ENCODE measurements at regions of chr1 and their contacts with region 1.

Region 1: DNA sequence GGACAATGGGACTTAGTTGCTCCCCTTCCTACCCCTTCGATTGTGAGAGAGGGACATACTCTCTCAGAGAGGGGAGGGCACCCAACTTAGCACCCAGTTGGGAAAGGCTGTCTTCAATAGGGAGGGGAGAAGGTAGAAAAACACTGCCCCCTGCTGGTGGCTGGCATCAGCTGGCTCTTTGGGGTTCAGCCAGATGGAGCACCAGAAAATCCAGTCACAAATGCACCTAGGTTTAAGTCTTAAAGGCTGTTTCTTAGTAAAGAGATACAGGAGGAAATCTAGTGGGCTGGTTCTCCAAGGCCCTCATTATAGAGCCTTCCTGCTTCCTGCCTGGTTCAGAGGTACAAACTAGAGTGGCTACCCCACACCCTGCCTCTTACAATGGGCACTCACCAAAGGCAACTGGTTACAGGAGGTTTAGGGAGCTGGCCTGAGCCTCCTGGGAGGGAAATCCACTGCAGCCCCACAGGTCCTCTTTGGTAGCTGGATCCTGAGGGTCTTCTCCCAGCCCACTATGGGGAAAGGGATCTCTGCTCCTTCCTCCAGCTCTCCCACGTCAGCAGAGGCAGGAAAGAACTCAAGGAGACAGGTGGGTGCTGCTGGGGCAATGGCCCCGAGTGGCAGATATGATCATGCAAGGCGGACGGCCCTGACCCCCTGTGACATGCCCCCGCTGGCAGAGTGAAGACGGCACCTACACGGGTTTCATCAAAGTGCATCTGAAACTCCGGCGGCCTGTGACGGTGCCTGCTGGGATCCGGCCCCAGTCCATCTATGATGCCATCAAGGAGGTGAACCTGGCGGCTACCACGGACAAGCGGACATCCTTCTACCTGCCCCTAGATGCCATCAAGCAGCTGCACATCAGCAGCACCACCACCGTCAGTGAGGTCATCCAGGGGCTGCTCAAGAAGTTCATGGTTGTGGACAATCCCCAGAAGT is 28.3 kb downstream of the EIF2D start:
- DNase-seq: peak; percentile 93
- ATAC-seq: peak; percentile 31
- H3K4me3 Mint-ChIP-seq: peak overlapping the region; percentile 65
- H3K27ac Mint-ChIP-seq: peak overlapping the region; percentile 99
- H3K4me1 Mint-ChIP-seq: peaks cover 87% of the 10 kb centered on the region
- H3K27me3 Mint-ChIP-seq: no peaks in the 10 kb centered on the region

Region 2: GRCh38 chr1:205204552-205204951 is 1379.4 kb before region 1 on chr1:
- CTCF ChIA-PET with region 1: no interaction called
- POLR2A ChIA-PET with region 1: no interaction called
- intact Hi-C with region 1: loop called in 1 of 2 experiments (anchors 10 kb)
- DNase-seq: no peak
- ATAC-seq: no peak
- H3K4me3 Mint-ChIP-seq: peak overlapping the region; percentile 0
- H3K27ac Mint-ChIP-seq: peak overlapping the region; percentile 85
- H3K4me1 Mint-ChIP-seq: peaks cover 74% of the 10 kb centered on the region
- H3K27me3 Mint-ChIP-seq: no peaks in the 10 kb centered on the region

Region 3: GRCh38 chr1:206469933-206470691 is 113.9 kb before region 1 on chr1 and contains the start of gene IKBKE:
- CTCF ChIA-PET with region 1: interaction called, 9 read pairs
- POLR2A ChIA-PET with region 1: interaction called, 3 read pairs
- intact Hi-C with region 1: loop called in 1 of 2 experiments (anchors 5 kb)
- DNase-seq: peak; percentile 74
- ATAC-seq: peak; percentile 53
- H3K4me3 Mint-ChIP-seq: peak within 1 kb of the TSS; percentile 83
- H3K27ac Mint-ChIP-seq: peak within 1 kb of the TSS; percentile 91
- H3K4me1 Mint-ChIP-seq: peaks cover 92% of the 10 kb centered on the region
- H3K27me3 Mint-ChIP-seq: no peaks in the 10 kb centered on the region
- total RNA-seq, gene IKBKE: 15.3 to 17.2 TPM

Region 4: DNA sequence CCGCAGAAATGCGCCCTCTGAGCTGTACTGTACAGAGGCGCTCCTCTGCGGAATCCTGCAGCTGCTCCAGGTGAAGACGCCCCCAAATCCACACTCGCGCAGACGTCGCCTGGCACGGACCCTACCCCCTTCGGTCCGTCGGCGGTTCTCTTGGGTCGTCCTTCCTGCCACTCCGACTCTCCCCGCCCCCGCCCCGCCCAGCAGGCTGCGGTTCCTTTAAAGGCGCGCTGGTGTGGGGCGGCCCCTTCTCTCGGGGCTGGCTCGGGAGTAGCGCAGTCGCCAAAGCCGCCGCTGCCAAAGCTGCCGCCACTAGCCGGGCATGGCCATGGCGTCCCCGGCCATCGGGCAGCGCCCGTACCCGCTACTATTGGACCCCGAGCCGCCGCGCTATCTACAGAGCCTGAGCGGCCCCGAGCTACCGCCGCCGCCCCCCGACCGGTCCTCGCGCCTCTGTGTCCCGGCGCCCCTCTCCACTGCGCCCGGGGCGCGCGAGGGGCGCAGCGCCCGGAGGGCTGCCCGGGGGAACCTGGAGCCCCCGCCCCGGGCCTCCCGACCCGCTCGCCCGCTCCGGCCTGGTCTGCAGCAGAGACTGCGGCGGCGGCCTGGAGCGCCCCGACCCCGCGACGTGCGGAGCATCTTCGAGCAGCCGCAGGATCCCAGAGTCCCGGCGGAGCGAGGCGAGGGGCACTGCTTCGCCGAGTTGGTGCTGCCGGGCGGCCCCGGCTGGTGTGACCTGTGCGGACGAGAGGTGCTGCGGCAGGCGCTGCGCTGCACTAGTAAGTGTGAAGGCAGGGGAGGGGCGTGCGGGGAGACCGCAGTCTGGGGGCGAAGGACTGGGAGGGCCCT is 76.5 kb before region 1 on chr1 and contains the start of gene RASSF5:
- CTCF ChIA-PET with region 1: interaction called, 16 read pairs
- POLR2A ChIA-PET with region 1: no interaction called
- intact Hi-C with region 1: loop called (anchors 2 kb)
- DNase-seq: peak; percentile 90
- ATAC-seq: peak; percentile 78
- H3K4me3 Mint-ChIP-seq: peak within 1 kb of the TSS; percentile 63
- H3K27ac Mint-ChIP-seq: peak within 1 kb of the TSS; percentile 49
- H3K4me1 Mint-ChIP-seq: peaks cover 47% of the 10 kb centered on the region
- H3K27me3 Mint-ChIP-seq: peaks cover 31% of the 10 kb centered on the region
- total RNA-seq, gene RASSF5: 223 to 239 TPM

Region 5: GRCh38 chr1:206551986-206552326 is 32.0 kb before region 1 on chr1:
- CTCF ChIA-PET with region 1: interaction called, 621 read pairs
- POLR2A ChIA-PET with region 1: interaction called, 51 read pairs
- intact Hi-C with region 1: loop called in 1 of 2 experiments (anchors 1 kb)
- DNase-seq: peak; percentile 91
- ATAC-seq: peak; percentile 84
- H3K4me3 Mint-ChIP-seq: peak overlapping the region; percentile 61
- H3K27ac Mint-ChIP-seq: peak overlapping the region; percentile 98
- H3K4me1 Mint-ChIP-seq: peaks cover 62% of the 10 kb centered on the region
- H3K27me3 Mint-ChIP-seq: no peaks in the 10 kb centered on the region

Region 6: DNA sequence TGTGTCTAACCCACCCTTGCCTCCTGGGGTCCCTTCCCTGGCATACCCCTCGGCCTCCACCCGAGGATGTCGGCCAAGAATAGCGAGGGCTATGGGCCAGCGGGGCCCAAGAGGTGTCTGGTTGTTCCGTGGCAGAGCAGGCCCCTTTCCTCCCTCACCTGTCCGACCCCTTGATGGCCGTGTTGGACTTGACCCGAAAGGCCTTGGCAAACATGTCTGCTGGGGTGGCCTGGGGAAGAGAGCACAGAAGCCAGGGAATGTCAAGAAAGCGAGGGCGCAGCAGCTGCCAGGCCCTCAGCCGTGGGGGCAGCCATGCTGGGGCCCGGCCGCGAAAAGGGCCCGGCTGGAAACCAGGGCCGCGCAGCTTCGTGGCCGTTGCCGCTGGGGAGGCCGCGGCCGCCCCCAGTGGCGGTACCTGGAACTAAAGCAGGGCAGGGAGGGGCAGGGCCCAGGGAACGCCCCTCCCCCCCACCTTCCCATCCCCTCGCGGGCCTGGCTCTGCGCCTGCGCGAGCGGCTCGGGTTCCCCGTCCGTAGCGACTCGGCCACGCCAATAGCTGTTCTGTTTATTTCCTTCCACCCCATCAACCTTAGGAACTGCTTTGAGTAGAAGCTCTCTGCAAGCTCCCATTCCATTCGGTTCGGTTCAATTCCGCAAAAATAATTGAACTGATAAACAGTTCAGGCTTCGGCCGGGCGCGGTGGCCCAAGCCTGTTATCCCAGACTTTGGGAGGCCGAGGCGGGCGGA is 28.3 kb after region 1 on chr1 and contains the start of gene EIF2D:
- CTCF ChIA-PET with region 1: interaction called, 14 read pairs
- POLR2A ChIA-PET with region 1: interaction called, 5 read pairs
- intact Hi-C with region 1: loop called in 1 of 2 experiments (anchors 2 kb)
- DNase-seq: peak; percentile 98
- ATAC-seq: peak; percentile 87
- H3K4me3 Mint-ChIP-seq: peak within 1 kb of the TSS; percentile 92
- H3K27ac Mint-ChIP-seq: peak within 1 kb of the TSS; percentile 94
- H3K4me1 Mint-ChIP-seq: peaks cover 40% of the 10 kb centered on the region
- H3K27me3 Mint-ChIP-seq: no peaks in the 10 kb centered on the region
- total RNA-seq, gene EIF2D: 91.2 to 100 TPM

Measured in activated CD4-positive, alpha-beta T cell treated with anti-CD3 and anti-CD28 coated beads for 36 hours (primary cell).